ENCODE measurements at regions of chr12 and their contacts with region 1.

Region 1: DNA sequence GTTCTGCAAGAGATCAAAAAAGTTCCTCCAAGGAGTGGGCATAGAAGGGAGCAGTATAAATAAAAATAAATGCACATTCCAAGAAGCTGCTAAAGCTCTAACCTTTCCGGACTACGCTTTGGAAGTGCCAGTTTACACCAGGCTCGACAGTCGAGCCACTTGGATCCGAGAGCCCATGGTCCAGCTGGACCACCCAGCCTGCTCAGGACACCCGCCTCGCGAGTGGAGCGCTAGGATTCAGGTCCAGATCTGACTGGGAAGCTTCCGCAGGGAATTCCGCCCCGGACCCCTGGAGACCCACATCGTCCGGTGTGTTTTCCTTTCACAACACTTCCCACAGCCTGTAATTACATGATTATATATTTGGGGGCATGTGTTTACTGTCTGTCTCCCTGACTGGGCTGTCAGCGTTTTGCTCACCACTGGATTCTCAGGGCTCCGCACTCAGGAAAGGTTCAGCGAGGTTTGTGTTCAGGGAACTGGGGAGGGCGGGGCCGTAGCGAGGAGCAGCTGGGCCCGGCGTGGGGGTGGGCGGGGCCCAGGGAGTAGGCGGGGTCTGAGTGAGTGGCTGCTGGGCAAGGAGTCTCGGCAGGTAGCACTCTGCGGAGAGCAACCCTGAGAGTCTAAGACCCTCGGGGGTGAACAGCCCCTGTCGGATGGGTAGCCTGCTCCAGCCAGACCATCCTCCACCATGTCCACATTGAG is 52.3 kb upstream of the TMEM263 start:
- DNase-seq: peak; percentile 88
- H3K4me3 Mint-ChIP-seq: peak overlapping the region; percentile 53
- H3K27ac Mint-ChIP-seq: no peak overlapping the region
- H3K4me1 Mint-ChIP-seq: no peaks in the 10 kb centered on the region
- H3K27me3 Mint-ChIP-seq: peaks cover 19% of the 10 kb centered on the region

Region 2: DNA sequence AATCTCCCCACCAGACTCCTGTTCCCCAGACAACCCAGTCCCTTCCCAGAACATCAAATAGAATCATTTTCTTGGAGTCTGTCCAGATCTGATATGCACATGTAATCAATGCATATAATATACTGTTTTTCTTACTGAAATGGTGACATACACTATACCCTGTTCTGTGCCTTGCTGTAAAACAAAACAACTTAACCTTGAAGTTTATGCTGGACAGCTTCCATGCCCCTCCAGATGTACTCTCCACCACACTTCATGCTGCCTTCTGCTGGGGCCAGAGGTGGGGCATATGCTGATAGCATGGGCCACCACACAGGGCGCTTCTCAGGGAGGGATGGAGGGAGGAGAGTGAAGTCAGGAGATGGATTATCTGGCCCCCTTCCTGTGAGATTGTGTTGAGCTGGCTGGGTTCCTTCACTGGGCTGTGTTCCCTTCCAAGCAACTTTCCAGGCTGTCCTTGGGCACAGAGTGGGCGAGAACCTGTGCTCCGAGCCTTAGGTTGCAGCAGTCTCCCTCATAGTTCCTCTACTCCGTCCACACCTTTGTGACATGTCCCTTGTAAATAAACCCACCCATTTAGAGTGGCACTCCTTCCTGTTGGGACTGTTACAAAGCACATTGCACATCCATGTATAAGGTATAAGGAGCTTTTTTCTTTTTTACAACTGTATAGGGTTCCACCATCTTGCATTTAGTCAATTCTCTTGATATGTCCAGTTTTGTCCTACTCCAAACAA is 206.5 kb before region 1 on chr12:
- CTCF ChIA-PET with region 1: no interaction called
- POLR2A ChIA-PET with region 1: no interaction called
- intact Hi-C with region 1: no loop called
- DNase-seq: no peak
- H3K4me3 Mint-ChIP-seq: no peak overlapping the region
- H3K27ac Mint-ChIP-seq: no peak overlapping the region
- H3K4me1 Mint-ChIP-seq: no peaks in the 10 kb centered on the region
- H3K27me3 Mint-ChIP-seq: no peaks in the 10 kb centered on the region

Region 3: DNA sequence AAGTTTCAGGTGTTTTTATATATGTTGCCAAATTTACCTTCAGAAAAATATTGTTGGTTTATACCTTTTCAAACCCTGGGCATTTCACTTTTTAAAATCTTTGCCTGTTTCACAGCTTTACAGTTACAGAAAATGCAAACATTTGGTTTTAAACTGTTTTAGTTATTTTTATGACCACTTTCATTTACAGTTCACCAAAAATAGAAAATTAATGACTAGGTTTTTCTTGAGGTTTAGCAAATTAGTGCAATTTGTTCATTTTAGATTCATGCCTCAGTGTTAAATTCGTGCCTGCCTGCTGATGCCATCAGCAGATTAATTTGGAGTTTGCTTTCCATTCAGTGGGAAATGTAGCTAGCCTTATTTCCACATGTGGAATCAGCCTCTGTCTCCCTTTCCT is 83.4 kb before region 1 on chr12:
- CTCF ChIA-PET with region 1: no interaction called
- POLR2A ChIA-PET with region 1: no interaction called
- intact Hi-C with region 1: loop called (anchors 5 kb)
- DNase-seq: no peak
- H3K4me3 Mint-ChIP-seq: no peak overlapping the region
- H3K27ac Mint-ChIP-seq: no peak overlapping the region
- H3K4me1 Mint-ChIP-seq: peaks cover 18% of the 10 kb centered on the region
- H3K27me3 Mint-ChIP-seq: no peaks in the 10 kb centered on the region

Measured in activated CD4-positive, alpha-beta memory T cell treated with anti-CD3 and anti-CD28 coated beads for 36 hours (primary cell).